Activated CD8-positive, alpha-beta T cell treated with anti-CD3 and anti-CD28 coated beads for 36 hours (primary cell): ENCODE measurements at regions of chr7 and their contacts with region 1.

Region 1: GRCh38 chr7:75914730-75915585 is at the start of gene POR:
- DNase-seq: peak; percentile 94
- ATAC-seq: peak; percentile 94
- H3K4me3 Mint-ChIP-seq: peak within 1 kb of the TSS; percentile 79
- H3K27ac Mint-ChIP-seq: peak within 1 kb of the TSS; percentile 78
- H3K4me1 Mint-ChIP-seq: peaks cover 28% of the 10 kb centered on the region
- H3K27me3 Mint-ChIP-seq: no peaks in the 10 kb centered on the region
- CTCF ChIP-seq: no peak
- total RNA-seq, gene POR: 22.8 to 25.2 TPM

Region 2: DNA sequence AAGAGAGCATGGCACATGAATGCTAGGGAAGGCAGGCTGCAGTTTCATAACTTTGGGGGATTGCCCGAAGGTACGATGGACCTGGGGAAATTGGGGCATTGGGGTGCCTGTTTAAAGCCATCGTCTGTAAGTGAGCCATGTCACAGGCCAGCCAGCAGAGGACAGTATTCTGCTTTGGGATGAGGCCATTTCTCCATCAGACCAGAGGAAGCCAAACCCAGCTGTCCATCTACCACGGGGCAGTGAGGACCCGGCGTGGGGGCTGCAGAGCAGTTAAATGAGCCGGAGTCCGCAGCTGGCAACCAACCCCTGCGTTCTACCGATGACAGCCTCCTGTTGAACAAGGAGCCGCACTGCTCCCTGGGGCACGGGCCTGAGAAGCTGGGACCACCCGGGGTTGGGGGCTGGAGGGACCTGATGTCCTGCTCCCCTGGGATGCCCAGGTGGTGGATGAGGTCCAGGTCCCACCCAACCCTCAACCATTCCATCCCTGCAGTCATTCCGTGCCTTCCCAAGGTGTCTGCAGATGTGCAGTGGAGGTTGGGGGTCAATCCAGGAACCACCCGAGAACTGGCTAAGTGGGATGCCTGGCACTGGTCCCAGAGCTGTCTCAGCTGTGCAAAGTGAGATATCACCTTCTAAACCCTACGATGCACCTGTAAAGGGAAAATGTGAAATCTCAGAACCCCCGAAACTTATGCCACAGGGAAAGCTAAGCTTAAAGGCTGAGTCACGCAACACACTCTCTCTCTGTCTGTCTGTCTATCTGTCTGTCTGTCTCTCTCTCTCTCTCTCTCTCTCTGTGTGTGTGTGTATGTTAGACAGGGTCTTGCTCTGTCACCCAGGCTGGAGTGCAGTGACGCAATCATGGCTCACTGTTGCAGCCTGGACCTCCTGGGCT is 48.2 kb before region 1 on chr7:
- CTCF ChIA-PET with region 1: interaction called, 8 read pairs
- POLR2A ChIA-PET with region 1: no interaction called
- intact Hi-C with region 1: loop called (anchors 10 kb)
- DNase-seq: peak; percentile 70
- ATAC-seq: peak; percentile 69
- H3K4me3 Mint-ChIP-seq: no peak overlapping the region
- H3K27ac Mint-ChIP-seq: no peak overlapping the region
- H3K4me1 Mint-ChIP-seq: peaks cover 22% of the 10 kb centered on the region
- H3K27me3 Mint-ChIP-seq: peaks cover 8% of the 10 kb centered on the region
- CTCF ChIP-seq: peak; percentile 93

Region 3: DNA sequence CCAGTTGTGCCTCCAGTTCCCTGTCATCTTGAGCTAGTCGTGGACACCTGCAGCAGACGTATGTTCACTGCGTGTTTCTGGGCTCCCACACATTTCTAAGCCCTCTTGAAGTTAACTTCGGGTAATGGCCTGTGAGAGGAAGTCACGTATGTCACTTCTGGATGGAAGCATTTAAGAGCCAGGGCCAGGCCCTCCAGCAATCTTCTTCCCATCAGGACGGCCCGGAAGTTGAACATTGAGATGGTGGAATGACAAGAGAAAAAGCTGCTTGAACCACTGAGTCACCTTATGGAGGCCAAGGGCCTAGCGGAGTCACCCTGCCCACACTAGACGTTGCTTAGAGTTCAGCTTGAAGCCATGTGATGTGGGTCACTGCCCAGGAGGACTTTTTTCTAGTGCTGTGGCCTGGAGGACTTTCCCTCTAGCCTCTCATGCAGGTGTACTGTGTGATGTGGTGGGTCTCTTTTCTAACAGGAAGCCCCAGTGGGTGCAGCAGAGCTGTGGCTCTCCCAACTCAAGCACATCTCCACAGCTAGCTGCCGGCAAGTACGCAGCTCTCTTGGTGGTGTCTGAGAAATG is 13.5 kb after region 1 on chr7:
- CTCF ChIA-PET with region 1: interaction called, 5 read pairs
- POLR2A ChIA-PET with region 1: interaction called, 14 read pairs
- intact Hi-C with region 1: no loop called
- DNase-seq: peak; percentile 66
- ATAC-seq: peak; percentile 87
- H3K4me3 Mint-ChIP-seq: no peak overlapping the region
- H3K27ac Mint-ChIP-seq: peak overlapping the region; percentile 68
- H3K4me1 Mint-ChIP-seq: peaks cover 11% of the 10 kb centered on the region
- H3K27me3 Mint-ChIP-seq: no peaks in the 10 kb centered on the region
- CTCF ChIP-seq: no peak